Ascending aorta (tissue), 2 donors: ENCODE measurements at regions of chr6 and their contacts with region 1.

Region 1: DNA sequence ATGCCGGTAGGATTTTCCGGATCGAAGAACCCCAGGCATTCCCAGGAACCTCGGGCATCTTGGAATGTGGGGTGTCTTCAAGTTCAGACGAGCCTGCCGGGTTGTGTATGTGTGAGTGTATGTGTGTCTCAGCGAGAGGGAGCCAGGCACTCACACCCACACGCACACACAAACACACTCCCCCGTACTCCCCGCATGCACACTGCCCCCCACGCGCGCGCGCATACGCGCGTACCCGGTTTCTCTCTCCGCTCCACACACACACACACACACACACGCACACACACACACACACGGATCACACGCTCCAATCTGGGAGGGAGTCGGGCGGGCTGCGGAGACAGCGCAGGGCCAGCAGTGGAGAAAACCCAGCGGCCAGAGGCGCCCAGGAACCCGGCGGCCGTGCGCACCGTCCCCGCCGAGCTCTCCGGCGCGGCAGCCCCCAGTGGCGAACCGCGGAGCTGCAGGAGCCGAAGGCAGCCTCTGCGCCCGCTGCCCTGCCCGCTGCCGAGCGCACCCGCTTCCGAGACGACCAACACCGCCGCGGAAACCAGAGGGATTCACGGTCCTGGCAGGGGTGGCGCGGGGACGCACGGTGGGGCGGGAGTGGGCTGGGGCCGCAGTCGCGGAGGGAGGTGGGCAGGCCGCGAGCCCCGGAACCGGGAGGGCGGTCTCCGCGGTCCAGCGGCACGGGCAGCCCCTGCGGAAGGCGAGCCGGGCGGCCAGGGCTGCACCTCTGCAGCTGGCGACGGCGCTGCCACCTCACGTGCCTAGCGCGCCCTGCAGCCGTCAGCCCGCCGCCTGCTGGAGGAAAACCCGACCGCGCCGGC is at the start of gene LRFN2:
- DNase-seq: peak in 1 of 2 donors; percentile 74
- H3K4me3 ChIP-seq: peak within 1 kb of the TSS; percentile 64 to 70
- H3K27ac ChIP-seq: no peak within 1 kb of the TSS
- H3K4me1 ChIP-seq: no peaks in the 10 kb centered on the region
- H3K27me3 ChIP-seq: peaks cover 5% of the 10 kb centered on the region
- CTCF ChIP-seq: peak; percentile 50 to 76 (median 61)
- total RNA-seq, gene LRFN2: not detected

Region 2: GRCh38 chr6:40112347-40112746 is 475.1 kb before region 1 on chr6:
- intact Hi-C with region 1: no loop called
- DNase-seq: no peak
- H3K4me3 ChIP-seq: no peak overlapping the region
- H3K27ac ChIP-seq: no peak overlapping the region
- H3K4me1 ChIP-seq: no peaks in the 10 kb centered on the region
- H3K27me3 ChIP-seq: no peaks in the 10 kb centered on the region
- CTCF ChIP-seq: no peak

Region 3: DNA sequence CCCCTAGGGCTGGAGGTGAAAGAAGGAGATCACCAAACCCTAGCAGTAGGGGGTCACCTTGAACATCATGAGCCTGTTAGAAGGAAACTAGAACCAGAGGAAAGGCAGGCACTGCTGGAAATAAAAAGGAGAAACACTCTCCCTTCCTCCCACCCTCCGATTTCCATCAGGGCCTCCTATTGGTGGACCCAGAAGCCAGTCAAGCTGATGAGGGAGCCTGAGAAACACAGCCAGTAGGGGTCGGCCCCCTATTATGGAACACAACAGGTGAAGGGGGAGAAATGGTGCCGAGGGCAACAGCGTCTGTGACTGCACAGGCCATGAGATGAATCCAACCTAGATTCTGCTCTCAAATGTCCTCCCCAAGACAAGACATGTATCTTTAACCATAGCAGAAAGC is 155.8 kb after region 1 on chr6:
- intact Hi-C with region 1: no loop called
- DNase-seq: no peak
- H3K4me3 ChIP-seq: no peak overlapping the region
- H3K27ac ChIP-seq: no peak overlapping the region
- H3K4me1 ChIP-seq: no peaks in the 10 kb centered on the region
- H3K27me3 ChIP-seq: no peaks in the 10 kb centered on the region
- CTCF ChIP-seq: no peak

Region 4: GRCh38 chr6:40822619-40823018 is 235.2 kb after region 1 on chr6:
- intact Hi-C with region 1: loop called (anchors 10 kb)
- DNase-seq: no peak
- H3K4me3 ChIP-seq: no peak overlapping the region
- H3K27ac ChIP-seq: no peak overlapping the region
- H3K4me1 ChIP-seq: no peaks in the 10 kb centered on the region
- H3K27me3 ChIP-seq: no peaks in the 10 kb centered on the region
- CTCF ChIP-seq: no peak